ENCODE measurements at regions of chr10 and their contacts with region 1.

Region 1: GRCh38 chr10:33240931-33241330 is 93.5 kb downstream of the NRP1 start:
- DNase-seq: no peak

Region 2: GRCh38 chr10:33501161-33501820 is 260.4 kb after region 1 on chr10:
- intact Hi-C with region 1: loop called (anchors 5 kb)
- DNase-seq: no peak